ENCODE measurements at regions of chr7 and their contacts with region 1.

Region 1: GRCh38 chr7:82810558-82811259 is 352.0 kb downstream of the PCLO start:
- DNase-seq: no peak
- ATAC-seq: peak; percentile 94
- H3K4me3 ChIP-seq: no peak overlapping the region
- H3K27ac ChIP-seq: no peak overlapping the region
- H3K4me1 ChIP-seq: no peaks in the 10 kb centered on the region
- H3K27me3 ChIP-seq: no peaks in the 10 kb centered on the region
- CTCF ChIP-seq: peak; percentile 51 to 60 (median 56); a peak in 5 of 6 replicates
- EP300 ChIP-seq: no peak
- POLR2A ChIP-seq: no peak
- RAD21 ChIP-seq: peak; percentile 59

Region 2: GRCh38 chr7:82534683-82535082 is 276.0 kb before region 1 on chr7:
- CTCF ChIA-PET with region 1: no interaction called
- POLR2A ChIA-PET with region 1: no interaction called
- RAD21 ChIA-PET with region 1: no interaction called
- SMC1A ChIA-PET with region 1: no interaction called
- in situ Hi-C with region 1: no loop called
- intact Hi-C with region 1: no loop called
- DNase-seq: no peak
- ATAC-seq: no peak
- H3K4me3 ChIP-seq: no peak overlapping the region
- H3K27ac ChIP-seq: no peak overlapping the region
- H3K4me1 ChIP-seq: no peaks in the 10 kb centered on the region
- H3K27me3 ChIP-seq: no peaks in the 10 kb centered on the region
- CTCF ChIP-seq: no peak
- EP300 ChIP-seq: no peak
- POLR2A ChIP-seq: no peak
- RAD21 ChIP-seq: no peak

Region 3: DNA sequence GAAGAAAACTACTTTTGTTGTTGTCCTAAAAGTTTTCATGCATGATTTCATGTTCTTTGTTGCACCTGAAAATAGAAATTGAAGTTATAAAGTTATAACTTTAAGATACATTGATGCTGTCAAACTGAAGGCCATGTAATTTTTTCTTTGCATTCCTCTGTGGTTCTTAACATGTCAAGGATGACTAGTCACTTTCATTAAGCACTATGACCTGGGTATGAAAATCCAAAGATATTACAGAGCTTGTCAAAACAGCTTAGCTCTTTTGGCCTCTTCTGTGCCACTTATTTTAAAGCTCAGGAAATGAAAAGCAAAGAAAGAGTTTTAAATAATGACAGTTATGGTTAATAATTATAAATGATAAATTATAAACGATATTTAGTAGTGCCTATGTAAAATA is 125.5 kb before region 1 on chr7:
- CTCF ChIA-PET with region 1: no interaction called
- POLR2A ChIA-PET with region 1: no interaction called
- RAD21 ChIA-PET with region 1: no interaction called
- SMC1A ChIA-PET with region 1: no interaction called
- in situ Hi-C with region 1: no loop called
- intact Hi-C with region 1: no loop called
- DNase-seq: no peak
- ATAC-seq: no peak
- H3K4me3 ChIP-seq: no peak overlapping the region
- H3K27ac ChIP-seq: no peak overlapping the region
- H3K4me1 ChIP-seq: no peaks in the 10 kb centered on the region
- H3K27me3 ChIP-seq: no peaks in the 10 kb centered on the region
- CTCF ChIP-seq: no peak
- EP300 ChIP-seq: no peak
- POLR2A ChIP-seq: no peak
- RAD21 ChIP-seq: no peak

Region 4: GRCh38 chr7:83271212-83272099 is 460.7 kb after region 1 on chr7:
- CTCF ChIA-PET with region 1: interaction called, 9 read pairs
- POLR2A ChIA-PET with region 1: no interaction called
- RAD21 ChIA-PET with region 1: no interaction called
- SMC1A ChIA-PET with region 1: no interaction called
- in situ Hi-C with region 1: loop called (anchors 10 kb)
- intact Hi-C with region 1: loop called (anchors 2 kb)
- DNase-seq: no peak
- ATAC-seq: peak; percentile 74
- H3K4me3 ChIP-seq: no peak overlapping the region
- H3K27ac ChIP-seq: no peak overlapping the region
- H3K4me1 ChIP-seq: no peaks in the 10 kb centered on the region
- H3K27me3 ChIP-seq: no peaks in the 10 kb centered on the region
- CTCF ChIP-seq: peak in 2 of 3 experiments; percentile 13 to 35; a peak in 2 of 6 replicates
- EP300 ChIP-seq: no peak
- POLR2A ChIP-seq: no peak
- RAD21 ChIP-seq: peak; percentile 39; the same call in 1 of the 2 replicates